Activated CD4-positive, alpha-beta memory T cell treated with anti-CD3 and anti-CD28 coated beads, Interleukin-2, amount 10 ng/mL, durations not matched to agents 7 days and 5 days (primary cell): ENCODE measurements at regions of chr4 and their contacts with region 1.

Region 1: GRCh38 chr4:98928505-98929340 is at the start of gene EIF4E:
- DNase-seq: peak; percentile 98
- H3K4me3 Mint-ChIP-seq: peak within 1 kb of the TSS; percentile 96
- H3K27ac Mint-ChIP-seq: peak within 1 kb of the TSS; percentile 97
- H3K4me1 Mint-ChIP-seq: peaks cover 46% of the 10 kb centered on the region
- H3K27me3 Mint-ChIP-seq: no peaks in the 10 kb centered on the region
- total RNA-seq, gene EIF4E: 80.1 to 88.5 TPM

Region 2: DNA sequence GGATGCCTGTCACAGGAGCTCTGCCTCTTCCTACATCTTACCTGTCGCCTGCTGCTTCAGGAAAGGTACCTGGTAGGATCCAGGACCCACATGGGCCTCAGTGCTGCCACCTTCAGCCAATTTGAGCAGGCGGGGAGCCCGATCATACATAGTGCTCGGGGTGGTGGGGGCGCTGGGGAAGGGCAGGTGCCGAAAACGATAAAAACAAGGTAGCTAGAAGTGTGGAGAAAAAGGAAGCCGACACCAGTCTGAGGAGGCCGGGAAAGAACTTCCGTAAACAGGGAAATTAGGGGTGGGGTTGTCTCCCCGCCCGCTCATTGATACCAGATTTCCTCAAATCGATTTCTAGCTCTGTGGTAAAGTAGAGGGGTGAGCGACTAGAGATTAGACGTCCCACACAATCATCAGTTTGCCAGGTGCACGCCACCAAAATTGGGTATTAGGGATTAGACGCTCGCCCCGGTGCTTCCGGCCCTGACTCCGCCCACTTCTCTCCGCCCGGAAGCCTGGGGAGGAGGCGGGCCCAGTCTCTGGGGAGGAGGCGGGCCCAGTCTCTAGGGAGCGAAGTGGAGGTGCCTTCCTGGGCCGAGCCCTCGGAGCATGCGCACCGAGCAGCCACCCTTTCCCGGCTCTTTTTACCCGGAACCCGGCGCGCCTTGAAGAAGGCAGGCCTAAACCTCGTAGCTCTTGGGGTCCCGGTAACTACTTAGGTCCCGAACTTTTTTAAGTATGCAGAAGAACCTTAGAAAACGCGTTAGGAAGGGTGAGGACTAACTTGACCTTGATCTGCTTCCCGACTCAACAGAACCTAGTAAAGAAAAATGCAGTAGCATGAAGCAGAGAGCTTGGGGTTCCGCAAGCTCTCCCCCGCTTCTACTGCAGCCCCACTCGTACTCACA is 785.5 kb before region 1 on chr4 and contains the start of gene STPG2:
- CTCF ChIA-PET with region 1: interaction called, 3 read pairs
- POLR2A ChIA-PET with region 1: interaction called, 13 read pairs
- DNase-seq: peak; percentile 94
- H3K4me3 Mint-ChIP-seq: peak within 1 kb of the TSS; percentile 79
- H3K27ac Mint-ChIP-seq: peak within 1 kb of the TSS; percentile 85
- H3K4me1 Mint-ChIP-seq: peaks cover 27% of the 10 kb centered on the region
- H3K27me3 Mint-ChIP-seq: peaks cover under 1% of the 10 kb centered on the region
- total RNA-seq, gene STPG2: not detected

Region 3: GRCh38 chr4:98639523-98639922 is 289.2 kb before region 1 on chr4:
- CTCF ChIA-PET with region 1: interaction called, 3 read pairs
- POLR2A ChIA-PET with region 1: interaction called, 10 read pairs
- DNase-seq: no peak
- H3K4me3 Mint-ChIP-seq: peak overlapping the region; percentile 63
- H3K27ac Mint-ChIP-seq: peak overlapping the region; percentile 82
- H3K4me1 Mint-ChIP-seq: peaks cover 46% of the 10 kb centered on the region
- H3K27me3 Mint-ChIP-seq: no peaks in the 10 kb centered on the region

Region 4: DNA sequence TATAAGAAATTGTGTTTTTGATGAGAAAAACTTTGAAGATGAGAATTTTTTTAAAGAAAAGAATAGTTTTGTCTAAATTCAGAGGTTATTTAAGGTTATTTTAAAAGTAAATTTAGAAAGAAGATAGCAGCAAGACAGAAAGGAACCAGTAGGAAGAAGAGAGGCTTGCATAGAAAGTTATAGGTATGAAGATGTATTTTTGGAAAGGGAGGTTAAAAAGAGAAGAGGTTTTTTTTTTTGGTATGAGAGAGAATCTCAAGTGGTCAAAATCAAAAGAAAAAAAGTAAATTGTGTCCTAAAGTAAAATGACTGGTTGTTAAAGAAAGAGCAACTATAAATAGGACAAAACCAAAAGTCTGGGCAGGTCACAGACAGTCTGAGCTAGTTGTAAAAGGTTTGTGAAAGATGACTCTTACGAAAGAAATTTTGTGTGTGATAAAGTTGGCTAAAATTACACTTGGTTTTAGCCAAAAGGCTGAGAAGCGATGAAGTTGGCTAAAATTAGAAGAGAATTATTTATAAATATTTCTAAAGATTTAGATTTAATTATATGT is 16.7 kb after region 1 on chr4:
- CTCF ChIA-PET with region 1: interaction called, 7 read pairs
- POLR2A ChIA-PET with region 1: interaction called, 12 read pairs
- DNase-seq: no peak
- H3K4me3 Mint-ChIP-seq: no peak overlapping the region
- H3K27ac Mint-ChIP-seq: no peak overlapping the region
- H3K4me1 Mint-ChIP-seq: no peaks in the 10 kb centered on the region
- H3K27me3 Mint-ChIP-seq: no peaks in the 10 kb centered on the region

Region 5: DNA sequence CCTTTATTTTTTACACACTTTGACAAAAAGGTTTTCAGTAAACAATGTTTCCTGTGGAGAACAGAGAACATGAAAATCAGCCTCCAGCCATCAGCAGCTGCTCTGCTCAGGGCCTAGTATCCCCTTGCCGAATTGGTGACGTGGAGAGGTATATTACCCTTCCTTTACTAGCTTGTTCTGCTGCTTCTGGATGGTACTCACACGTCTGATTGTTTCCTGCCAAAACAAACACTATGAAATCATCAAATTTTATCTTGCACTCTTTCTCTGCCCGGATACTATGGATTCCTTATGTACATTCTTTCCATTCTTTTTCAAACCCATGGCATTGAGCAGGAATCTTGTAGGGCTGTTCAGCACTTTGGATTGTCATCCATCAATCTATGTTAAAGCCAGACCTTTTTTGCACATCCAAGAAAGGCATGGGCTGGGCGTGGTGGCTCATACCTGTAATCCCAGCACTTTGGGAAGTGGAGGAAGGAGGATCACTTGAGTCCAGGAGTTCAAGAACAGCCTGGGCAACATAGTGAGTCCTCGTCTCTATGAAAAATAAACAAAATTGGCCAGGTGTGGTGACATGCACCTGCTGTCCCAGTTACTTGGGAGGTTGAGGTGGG is 48.1 kb after region 1 on chr4:
- CTCF ChIA-PET with region 1: no interaction called
- POLR2A ChIA-PET with region 1: no interaction called
- DNase-seq: no peak
- H3K4me3 Mint-ChIP-seq: no peak overlapping the region
- H3K27ac Mint-ChIP-seq: no peak overlapping the region
- H3K4me1 Mint-ChIP-seq: no peaks in the 10 kb centered on the region
- H3K27me3 Mint-ChIP-seq: peaks cover 4% of the 10 kb centered on the region

Region 6: GRCh38 chr4:99088481-99089365 is 160.0 kb after region 1 on chr4 and contains the start of gene ADH5:
- CTCF ChIA-PET with region 1: no interaction called
- POLR2A ChIA-PET with region 1: interaction called, 47 read pairs
- DNase-seq: peak; percentile 92
- H3K4me3 Mint-ChIP-seq: peak within 1 kb of the TSS; percentile 93
- H3K27ac Mint-ChIP-seq: peak within 1 kb of the TSS; percentile 97
- H3K4me1 Mint-ChIP-seq: peaks cover 45% of the 10 kb centered on the region
- H3K27me3 Mint-ChIP-seq: no peaks in the 10 kb centered on the region
- total RNA-seq, gene ADH5: 107 to 114 TPM